GM10248 (cell line): ENCODE measurements at regions of chr7 and their contacts with region 1.

Region 1: GRCh38 chr7:132723506-132724081 is 147.3 kb upstream of the PLXNA4 start:
- DNase-seq: no peak
- CTCF ChIP-seq: no peak

Region 2: DNA sequence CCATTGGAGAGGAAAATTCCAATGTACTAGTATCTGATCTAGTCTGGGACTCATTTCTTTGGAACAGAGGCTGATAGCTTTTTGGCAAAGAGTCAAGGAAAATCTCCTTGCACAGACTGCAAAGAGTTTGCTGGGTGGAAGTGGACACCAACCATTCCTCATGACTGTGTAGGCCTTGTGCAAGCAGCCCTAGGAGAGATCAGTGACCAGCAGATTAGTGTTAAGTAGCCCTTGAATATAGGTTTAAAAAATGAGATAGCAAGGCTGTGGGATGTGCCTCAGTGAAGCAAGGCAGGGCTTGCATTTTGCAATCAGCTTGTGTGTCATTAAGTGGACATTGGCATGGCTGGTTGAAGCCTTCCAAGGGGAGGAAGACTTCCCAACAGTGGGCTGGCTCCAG is 488.9 kb before region 1 on chr7:
- CTCF ChIA-PET with region 1: no interaction called
- POLR2A ChIA-PET with region 1: no interaction called
- DNase-seq: no peak
- CTCF ChIP-seq: no peak

Region 3: GRCh38 chr7:132709971-132710567 is 13.5 kb before region 1 on chr7:
- CTCF ChIA-PET with region 1: interaction called, 17 read pairs
- POLR2A ChIA-PET with region 1: no interaction called
- DNase-seq: no peak
- CTCF ChIP-seq: peak; percentile 16